ENCODE measurements at regions of chr4 and their contacts with region 1.

Region 1: GRCh38 chr4:154491341-154492271 is at the start of gene DCHS2:
- DNase-seq: peak; percentile 28
- H3K4me3 Mint-ChIP-seq: peak within 1 kb of the TSS; percentile 63
- H3K27ac Mint-ChIP-seq: no peak within 1 kb of the TSS
- H3K4me1 Mint-ChIP-seq: peaks cover 17% of the 10 kb centered on the region
- H3K27me3 Mint-ChIP-seq: peaks cover 55% of the 10 kb centered on the region
- total RNA-seq, gene DCHS2: not detected

Region 2: GRCh38 chr4:153759407-153760316 is 731.9 kb before region 1 on chr4 and contains the start of gene RNF175:
- CTCF ChIA-PET with region 1: no interaction called
- POLR2A ChIA-PET with region 1: no interaction called
- intact Hi-C with region 1: no loop called
- DNase-seq: peak; percentile 17
- H3K4me3 Mint-ChIP-seq: peak within 1 kb of the TSS; percentile 6
- H3K27ac Mint-ChIP-seq: no peak within 1 kb of the TSS
- H3K4me1 Mint-ChIP-seq: peaks cover 6% of the 10 kb centered on the region
- H3K27me3 Mint-ChIP-seq: peaks cover 39% of the 10 kb centered on the region
- total RNA-seq, gene RNF175: not detected

Region 3: DNA sequence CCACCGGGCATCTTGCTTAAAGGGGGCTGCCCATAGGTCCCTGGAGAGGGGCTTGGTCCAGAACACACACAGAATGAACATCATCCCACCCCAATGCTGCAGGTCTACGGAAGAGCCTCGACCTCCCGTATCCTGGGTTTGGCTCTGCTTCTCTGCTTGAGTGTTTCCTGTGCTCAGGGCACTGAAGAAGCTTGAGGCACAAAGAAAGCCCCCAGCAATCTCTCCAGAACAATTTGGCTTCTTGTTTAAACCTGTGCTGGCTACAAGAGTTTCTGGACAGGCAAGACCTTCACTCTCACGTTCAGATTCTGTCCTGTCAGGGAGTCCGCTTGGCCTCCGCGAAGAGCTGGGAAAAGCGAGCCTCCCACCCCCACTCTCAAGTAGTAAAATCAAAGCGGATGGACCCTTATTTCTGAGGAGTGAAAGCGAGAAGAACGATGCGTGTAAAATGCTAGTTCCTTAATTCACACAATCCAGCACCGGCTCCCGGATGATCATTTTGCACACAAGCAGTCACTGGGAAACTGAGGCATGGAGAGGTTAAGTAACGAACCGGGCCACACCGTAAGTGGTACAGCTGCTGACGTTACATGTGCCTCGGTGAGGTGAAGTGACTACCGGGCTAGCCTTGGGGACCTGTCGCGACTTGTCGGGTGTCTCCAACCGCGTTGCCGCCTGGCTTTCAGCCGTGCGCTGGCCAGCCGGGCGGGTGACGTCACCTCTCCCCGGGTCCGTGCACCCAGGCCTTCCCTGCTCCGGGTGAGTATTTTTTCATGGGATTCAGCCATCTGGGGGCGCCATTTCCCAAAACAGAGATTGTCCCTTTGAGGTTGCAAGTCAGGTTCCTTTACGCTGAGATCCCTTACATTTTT is 699.6 kb before region 1 on chr4:
- CTCF ChIA-PET with region 1: no interaction called
- POLR2A ChIA-PET with region 1: no interaction called
- intact Hi-C with region 1: loop called (anchors 2 kb)
- DNase-seq: peak; percentile 71
- H3K4me3 Mint-ChIP-seq: peak overlapping the region; percentile 63
- H3K27ac Mint-ChIP-seq: no peak overlapping the region
- H3K4me1 Mint-ChIP-seq: peaks cover 30% of the 10 kb centered on the region
- H3K27me3 Mint-ChIP-seq: peaks cover 85% of the 10 kb centered on the region

Measured in activated CD4-positive, alpha-beta memory T cell treated with anti-CD3 and anti-CD28 coated beads for 36 hours (primary cell).